A673 (cell line): ENCODE measurements at regions of chr1 and their contacts with region 1.

Region 1: GRCh38 chr1:2050461-2050792 is 216 bp downstream of the PRKCZ start:
- DNase-seq: no peak
- H3K4me3 ChIP-seq: peak overlapping the region; percentile 54
- H3K27ac ChIP-seq: no peak overlapping the region
- H3K4me1 ChIP-seq: no peaks in the 10 kb centered on the region
- H3K27me3 ChIP-seq: peaks cover 41% of the 10 kb centered on the region
- CTCF ChIP-seq: no peak

Region 2: DNA sequence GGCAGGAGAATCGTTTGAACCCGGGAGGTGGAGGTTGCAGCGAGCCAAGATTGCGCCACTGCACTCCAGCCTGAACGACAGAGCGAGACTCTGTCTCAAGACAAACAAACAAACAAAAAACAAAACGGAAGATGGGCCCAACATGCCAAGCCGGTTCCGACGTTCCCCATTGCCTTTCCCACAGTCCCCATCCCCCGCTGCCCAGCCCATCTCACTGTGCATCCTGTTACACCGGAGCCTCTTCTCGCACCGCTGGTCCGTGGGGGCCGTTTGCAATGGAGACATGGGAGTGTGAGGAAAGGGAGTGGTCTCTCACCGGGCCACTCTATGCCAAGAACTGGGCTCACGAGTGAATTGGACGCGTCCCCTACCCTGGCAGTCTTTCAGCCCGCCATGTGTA is 45.6 kb before region 1 on chr1:
- CTCF ChIA-PET with region 1: no interaction called
- POLR2A ChIA-PET with region 1: interaction called, 12 read pairs
- intact Hi-C with region 1: no loop called
- DNase-seq: no peak
- H3K4me3 ChIP-seq: no peak overlapping the region
- H3K27ac ChIP-seq: no peak overlapping the region
- H3K4me1 ChIP-seq: no peaks in the 10 kb centered on the region
- H3K27me3 ChIP-seq: peaks cover 31% of the 10 kb centered on the region
- CTCF ChIP-seq: no peak

Region 3: GRCh38 chr1:2628191-2628932 is 577.9 kb after region 1 on chr1:
- CTCF ChIA-PET with region 1: no interaction called
- POLR2A ChIA-PET with region 1: no interaction called
- intact Hi-C with region 1: no loop called
- DNase-seq: no peak
- H3K4me3 ChIP-seq: no peak overlapping the region
- H3K27ac ChIP-seq: no peak overlapping the region
- H3K4me1 ChIP-seq: no peaks in the 10 kb centered on the region
- H3K27me3 ChIP-seq: peaks cover 45% of the 10 kb centered on the region
- CTCF ChIP-seq: no peak